ENCODE measurements at regions of chr19 and their contacts with region 1.

Region 1: DNA sequence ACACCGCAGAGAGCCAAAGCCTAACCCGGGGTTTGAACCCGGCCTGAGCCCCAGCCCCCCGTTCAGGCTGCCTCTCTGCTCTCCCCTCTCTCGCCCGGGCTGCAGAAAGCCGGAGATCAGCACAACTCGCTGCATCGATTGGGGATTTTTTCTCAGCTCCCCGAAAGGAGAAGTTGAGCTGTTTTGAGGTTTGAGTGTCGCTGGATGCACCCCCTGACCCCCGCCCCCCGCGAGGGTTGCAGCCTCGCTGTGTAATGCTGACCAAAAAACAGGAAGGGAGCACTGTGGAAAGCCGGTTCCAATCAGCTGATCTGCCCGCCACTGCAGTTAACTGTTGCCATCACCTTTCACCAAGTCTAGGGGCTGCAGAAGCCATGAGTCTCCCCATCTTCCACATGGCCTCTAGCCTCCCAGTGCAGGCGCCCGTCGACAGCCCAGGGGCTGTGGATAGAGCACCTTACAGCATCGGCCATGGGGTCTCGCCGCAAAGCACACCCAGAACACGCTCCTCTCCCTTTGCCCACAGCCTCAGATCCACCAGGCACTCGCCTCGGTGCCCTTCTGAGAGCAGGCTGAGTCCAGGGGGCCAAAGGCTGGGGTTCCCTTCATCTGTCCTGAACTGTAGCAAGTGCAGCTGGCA is 34.5 kb downstream of the MYO9B start:
- DNase-seq: peak; percentile 87 to 96 (median 96)
- H3K4me3 ChIP-seq: peak overlapping the region in 6 of 7 experiments; percentile 25 to 61 (median 38)
- H3K27ac ChIP-seq: peak overlapping the region in 1 of 2 experiments; percentile 74
- H3K4me1 ChIP-seq: peaks cover 2 to 63% (median 38%) of the 10 kb centered on the region in 4 experiments
- H3K27me3 ChIP-seq: no peaks in the 10 kb centered on the region

Region 2: GRCh38 chr19:17090583-17090982 is 19.5 kb before region 1 on chr19:
- CTCF ChIA-PET with region 1: interaction called, 12 read pairs
- POLR2A ChIA-PET with region 1: interaction called, 4 read pairs
- DNase-seq: peak; percentile 63 to 95 (median 94)
- H3K4me3 ChIP-seq: peak overlapping the region in 2 of 7 experiments; percentile 7 to 27
- H3K27ac ChIP-seq: peak overlapping the region; percentile 51 to 58
- H3K4me1 ChIP-seq: peaks cover 10 to 47% (median 34%) of the 10 kb centered on the region in 4 experiments
- H3K27me3 ChIP-seq: no peaks in the 10 kb centered on the region

Region 3: DNA sequence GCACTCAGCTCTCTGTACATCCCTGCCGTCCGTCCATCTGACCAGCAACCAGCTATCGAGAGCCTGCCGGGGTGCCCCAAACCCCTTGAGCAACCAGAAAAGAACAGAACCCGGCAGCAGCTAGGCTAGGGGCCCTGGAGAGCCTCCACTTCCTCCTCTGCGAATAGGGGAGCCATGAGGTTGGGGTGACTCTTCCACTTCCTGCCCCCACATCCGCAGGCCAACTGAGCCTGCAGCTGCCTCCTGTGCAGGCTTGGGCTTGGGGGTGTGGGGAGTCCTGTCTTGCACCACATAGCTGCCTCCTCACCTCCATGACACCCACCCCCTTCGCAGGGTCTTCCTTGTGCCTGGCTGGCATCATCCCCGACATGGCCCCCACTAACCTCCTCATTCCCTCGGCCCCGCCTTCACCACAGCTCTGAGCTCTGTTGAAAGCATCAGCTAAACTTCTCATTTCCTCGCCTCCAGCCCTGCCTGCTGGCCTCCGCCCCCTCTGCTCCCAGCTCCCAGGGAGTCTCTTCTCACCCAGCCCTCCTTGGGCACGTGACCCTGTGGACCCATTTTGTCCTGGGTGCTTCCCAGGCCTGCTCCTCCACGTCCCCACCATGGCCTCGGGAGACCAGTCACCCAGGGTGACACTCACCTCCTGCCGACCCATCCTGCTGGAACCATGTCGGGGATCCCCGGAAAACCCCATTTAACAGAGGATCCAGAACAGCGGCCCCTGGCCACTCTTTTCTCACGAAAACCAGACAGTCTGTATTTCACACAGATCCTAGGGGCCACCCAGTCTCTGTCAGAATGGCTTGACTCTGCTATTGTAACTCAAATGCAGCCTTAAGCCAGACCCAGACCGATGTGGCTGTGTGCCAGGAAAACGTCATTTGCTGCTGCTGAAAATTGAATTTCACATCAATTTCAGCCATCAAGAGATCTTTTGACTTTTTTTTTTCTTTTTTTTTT is 15.9 kb after region 1 on chr19:
- CTCF ChIA-PET with region 1: interaction called, 13 read pairs
- POLR2A ChIA-PET with region 1: interaction called, 4 read pairs
- DNase-seq: peak; percentile 75 to 97 (median 95)
- H3K4me3 ChIP-seq: peak overlapping the region in 5 of 7 experiments; percentile 29 to 58 (median 41)
- H3K27ac ChIP-seq: peak overlapping the region; percentile 65 to 82
- H3K4me1 ChIP-seq: peaks cover 6 to 51% (median 31%) of the 10 kb centered on the region in 4 experiments
- H3K27me3 ChIP-seq: no peaks in the 10 kb centered on the region